Naive thymus-derived CD4-positive, alpha-beta T cell (primary cell): ENCODE measurements at regions of chr2 and their contacts with region 1.

Region 1: GRCh38 chr2:202831242-202832220 is 40.0 kb downstream of the ICA1L start:
- DNase-seq: peak in 8 of 9 donors; percentile 10 to 56 (median 46)
- ATAC-seq: peak; percentile 80
- H3K4me3 ChIP-seq: no peak overlapping the region
- H3K4me3 Mint-ChIP-seq: peak overlapping the region in 8 of 10 donors; percentile 11 to 71 (median 38)
- H3K27ac ChIP-seq: no peak overlapping the region
- H3K27ac Mint-ChIP-seq: peak overlapping the region in 4 of 9 donors; percentile 14 to 75 (median 63)
- H3K4me1 ChIP-seq: peaks cover 0 to 9% of the 10 kb centered on the region in 2 donors
- H3K4me1 Mint-ChIP-seq: peaks cover 6 to 17% (median 10%) of the 10 kb centered on the region in 7 donors
- H3K27me3 ChIP-seq: no peaks in the 10 kb centered on the region
- H3K27me3 Mint-ChIP-seq: no peaks in the 10 kb centered on the region

Region 2: DNA sequence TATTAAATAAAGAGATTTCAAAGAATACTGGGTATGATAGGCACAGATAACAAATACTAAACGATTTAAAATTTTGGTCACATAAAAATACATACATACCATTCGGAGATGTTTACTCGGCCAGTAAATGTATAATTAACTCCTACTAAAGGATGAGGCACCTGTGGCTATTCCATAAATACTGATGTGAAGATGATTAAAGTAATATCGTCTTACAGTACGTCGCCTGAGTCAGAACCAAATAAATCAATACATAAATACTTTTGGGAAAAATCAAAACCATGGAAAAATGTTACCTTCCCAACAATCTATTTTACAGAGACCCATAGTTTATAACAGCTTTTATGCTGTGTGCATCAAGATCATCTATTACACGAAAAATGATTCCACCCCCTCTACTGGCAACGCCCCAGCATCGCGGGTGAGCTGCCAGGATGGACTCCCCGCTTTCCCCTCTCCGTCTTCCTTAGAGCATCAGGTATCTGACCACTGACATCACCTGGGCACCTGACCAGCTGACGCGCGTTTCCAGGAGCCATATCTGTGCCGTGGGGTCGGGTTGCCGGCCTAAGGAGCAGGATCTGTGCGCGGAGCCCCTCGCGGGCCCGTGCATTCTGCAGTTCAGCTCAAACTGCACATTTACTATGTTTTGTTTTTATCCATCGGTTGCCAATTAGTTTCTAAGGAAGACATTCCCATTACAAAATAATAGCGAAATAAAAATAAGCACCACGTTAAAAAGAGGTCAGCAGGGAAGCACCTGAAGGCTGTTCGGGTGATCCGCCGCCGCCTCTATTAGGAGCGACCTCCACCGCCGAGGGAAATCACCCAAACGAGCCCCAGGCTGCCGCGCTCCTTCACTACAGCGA is 39.1 kb after region 1 on chr2:
- CTCF ChIA-PET with region 1: no interaction called
- POLR2A ChIA-PET with region 1: no interaction called
- intact Hi-C with region 1: loop called (anchors 1 kb)
- DNase-seq: peak; percentile 32 to 68 (median 57)
- ATAC-seq: peak; percentile 85
- H3K4me3 ChIP-seq: peak overlapping the region; percentile 84
- H3K4me3 Mint-ChIP-seq: peak overlapping the region; percentile 89 to 98 (median 94)
- H3K27ac ChIP-seq: peak overlapping the region; percentile 60
- H3K27ac Mint-ChIP-seq: peak overlapping the region in 7 of 9 donors; percentile 8 to 84 (median 66)
- H3K4me1 ChIP-seq: peaks cover 0 to 3% of the 10 kb centered on the region in 2 donors
- H3K4me1 Mint-ChIP-seq: peaks cover 0 to 13% (median 7%) of the 10 kb centered on the region in 7 donors
- H3K27me3 ChIP-seq: no peaks in the 10 kb centered on the region
- H3K27me3 Mint-ChIP-seq: no peaks in the 10 kb centered on the region

Region 3: DNA sequence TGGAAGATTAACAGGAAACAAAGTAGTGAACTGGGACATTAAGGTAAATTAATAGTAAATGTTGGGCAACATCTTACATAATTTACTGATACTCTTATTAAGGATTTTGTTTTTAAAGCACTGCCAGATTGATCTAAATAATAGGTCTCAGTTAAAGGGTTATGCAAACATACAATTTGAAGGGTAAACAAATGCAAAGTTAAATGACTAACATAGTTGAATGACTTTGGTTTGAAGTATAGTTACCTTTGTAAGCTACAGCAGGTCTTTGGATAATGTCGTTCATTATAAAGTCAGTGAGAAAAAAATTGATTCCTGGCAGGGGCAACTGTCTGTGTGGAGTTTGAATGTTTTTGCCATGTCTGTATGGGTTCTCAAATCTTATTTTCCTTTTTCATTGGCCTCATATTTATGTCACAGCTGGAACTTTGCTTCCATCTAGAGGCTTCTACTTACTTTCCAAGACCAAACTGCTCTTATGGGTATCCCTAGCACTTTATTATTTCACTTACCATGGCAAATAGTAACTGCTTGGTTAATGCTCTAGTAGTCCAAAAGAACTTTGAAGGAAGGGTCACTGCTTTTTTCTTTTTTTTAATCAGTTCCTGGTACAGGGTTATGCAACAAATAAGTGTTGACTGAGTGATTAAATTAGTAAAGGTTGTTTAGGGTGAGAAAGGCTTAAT is 290.9 kb after region 1 on chr2:
- CTCF ChIA-PET with region 1: no interaction called
- POLR2A ChIA-PET with region 1: no interaction called
- intact Hi-C with region 1: loop called in 1 of 2 experiments (anchors 1 kb)
- DNase-seq: peak in 1 of 9 donors; percentile 2
- ATAC-seq: no peak
- H3K4me3 ChIP-seq: no peak overlapping the region
- H3K4me3 Mint-ChIP-seq: no peak overlapping the region
- H3K27ac ChIP-seq: no peak overlapping the region
- H3K27ac Mint-ChIP-seq: no peak overlapping the region
- H3K4me1 ChIP-seq: no peaks in the 10 kb centered on the region
- H3K4me1 Mint-ChIP-seq: no peaks in the 10 kb centered on the region
- H3K27me3 ChIP-seq: no peaks in the 10 kb centered on the region
- H3K27me3 Mint-ChIP-seq: no peaks in the 10 kb centered on the region

Region 4: DNA sequence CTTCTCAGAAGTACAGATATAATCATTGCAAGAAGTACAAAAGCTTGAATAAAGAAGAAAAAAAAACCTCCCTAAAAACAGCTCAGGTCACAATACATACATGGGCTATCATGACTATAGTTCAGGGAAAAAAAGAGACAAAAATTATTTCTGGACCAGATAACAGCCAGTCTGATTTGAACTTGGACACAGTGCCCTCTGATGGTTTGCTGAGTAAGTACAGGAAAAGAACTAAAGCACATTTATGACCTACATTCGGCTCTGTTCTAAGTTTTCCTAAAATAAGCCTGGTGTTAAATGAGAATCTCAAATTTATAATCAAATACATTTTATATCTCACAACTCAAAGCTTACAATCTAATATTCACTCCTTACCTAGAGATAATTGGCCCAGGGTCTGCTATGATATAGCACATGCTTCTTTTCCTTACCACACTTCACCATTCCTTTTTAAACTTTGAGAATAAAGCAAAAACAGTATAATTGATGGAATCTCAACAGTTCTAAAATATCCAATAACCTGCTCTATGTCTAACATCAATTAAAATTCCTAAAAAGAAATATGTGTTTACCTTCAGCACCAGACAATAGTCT is 622.4 kb after region 1 on chr2:
- CTCF ChIA-PET with region 1: no interaction called
- POLR2A ChIA-PET with region 1: no interaction called
- intact Hi-C with region 1: loop called in 1 of 2 experiments (anchors 5 kb)
- DNase-seq: peak in 7 of 9 donors; percentile 10 to 52 (median 34)
- ATAC-seq: peak; percentile 73
- H3K4me3 ChIP-seq: no peak overlapping the region
- H3K4me3 Mint-ChIP-seq: no peak overlapping the region
- H3K27ac ChIP-seq: no peak overlapping the region
- H3K27ac Mint-ChIP-seq: no peak overlapping the region
- H3K4me1 ChIP-seq: no peaks in the 10 kb centered on the region
- H3K4me1 Mint-ChIP-seq: peaks cover 0 to 1% (median 0%) of the 10 kb centered on the region in 7 donors
- H3K27me3 ChIP-seq: no peaks in the 10 kb centered on the region
- H3K27me3 Mint-ChIP-seq: no peaks in the 10 kb centered on the region